Right cardiac atrium (tissue), 5 donors: ENCODE measurements at regions of chr10 and their contacts with region 1.

Region 1: DNA sequence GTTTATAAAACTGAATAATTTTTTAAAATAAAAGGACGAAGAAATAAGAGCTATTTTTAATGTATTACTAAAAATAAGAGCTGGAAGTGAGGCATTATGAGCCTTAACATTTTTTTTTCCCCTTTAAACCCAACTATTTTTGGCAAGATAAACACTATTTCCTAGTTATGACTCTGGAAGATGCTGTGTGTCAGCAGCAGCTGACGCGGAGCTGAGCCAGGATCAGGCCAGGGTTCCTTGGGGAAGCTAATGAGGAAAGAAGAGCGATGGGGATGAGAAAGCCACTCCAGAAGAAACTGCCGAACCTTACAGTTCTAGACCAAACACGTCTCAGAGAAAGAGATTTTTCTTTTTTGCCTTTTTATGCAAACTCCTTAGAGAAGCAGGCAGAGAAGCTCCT is 85.9 kb downstream of the USP6NL start:
- DNase-seq: peak; percentile 78 to 92 (median 91)
- ATAC-seq: peak; percentile 77 to 83
- H3K4me3 ChIP-seq: no peak overlapping the region
- H3K27ac ChIP-seq: no peak overlapping the region
- H3K4me1 ChIP-seq: no peaks in the 10 kb centered on the region
- H3K27me3 ChIP-seq: no peaks in the 10 kb centered on the region

Region 2: GRCh38 chr10:11236234-11236633 is 289.3 kb before region 1 on chr10:
- intact Hi-C with region 1: no loop called
- DNase-seq: no peak
- ATAC-seq: no peak
- H3K4me3 ChIP-seq: no peak overlapping the region
- H3K27ac ChIP-seq: no peak overlapping the region
- H3K4me1 ChIP-seq: no peaks in the 10 kb centered on the region
- H3K27me3 ChIP-seq: no peaks in the 10 kb centered on the region

Region 3: GRCh38 chr10:11611248-11612020 is 85.9 kb after region 1 on chr10 and contains the start of gene USP6NL:
- intact Hi-C with region 1: loop called in 1 of 4 experiments (anchors 10 kb)
- DNase-seq: peak; percentile 92 to 96 (median 96)
- ATAC-seq: peak; percentile 97
- H3K4me3 ChIP-seq: peak within 1 kb of the TSS; percentile 79
- H3K27ac ChIP-seq: peak within 1 kb of the TSS; percentile 97
- H3K4me1 ChIP-seq: peaks cover 2% of the 10 kb centered on the region
- H3K27me3 ChIP-seq: no peaks in the 10 kb centered on the region
- total RNA-seq, gene USP6NL: 8.7 to 12.5 (median 9.8) TPM